Ascending aorta (tissue), 2 donors: ENCODE measurements at regions of chr22 and their contacts with region 1.

Region 1: GRCh38 chr22:17910561-17911311 is 113.6 kb downstream of the MICAL3 start:
- DNase-seq: peak; percentile 44 to 87
- H3K4me3 ChIP-seq: no peak overlapping the region
- H3K27ac ChIP-seq: peak overlapping the region; percentile 67 to 79
- H3K4me1 ChIP-seq: peaks cover 3 to 23% of the 10 kb centered on the region in 2 donors
- H3K27me3 ChIP-seq: no peaks in the 10 kb centered on the region
- CTCF ChIP-seq: peak in 2 of 3 experiments; percentile 34 to 49

Region 2: GRCh38 chr22:17810570-17811116 is 100.1 kb before region 1 on chr22:
- intact Hi-C with region 1: no loop called
- DNase-seq: no peak
- H3K4me3 ChIP-seq: no peak overlapping the region
- H3K27ac ChIP-seq: no peak overlapping the region
- H3K4me1 ChIP-seq: no peaks in the 10 kb centered on the region
- H3K27me3 ChIP-seq: no peaks in the 10 kb centered on the region
- CTCF ChIP-seq: no peak

Region 3: GRCh38 chr22:17824457-17824856 is 86.3 kb before region 1 on chr22:
- intact Hi-C with region 1: no loop called
- DNase-seq: no peak
- H3K4me3 ChIP-seq: no peak overlapping the region
- H3K27ac ChIP-seq: no peak overlapping the region
- H3K4me1 ChIP-seq: no peaks in the 10 kb centered on the region
- H3K27me3 ChIP-seq: no peaks in the 10 kb centered on the region
- CTCF ChIP-seq: no peak

Region 4: GRCh38 chr22:17862646-17863181 is 48.0 kb before region 1 on chr22:
- intact Hi-C with region 1: loop called (anchors 5 kb)
- DNase-seq: no peak
- H3K4me3 ChIP-seq: no peak overlapping the region
- H3K27ac ChIP-seq: no peak overlapping the region
- H3K4me1 ChIP-seq: peaks cover 0 to 10% of the 10 kb centered on the region in 2 donors
- H3K27me3 ChIP-seq: no peaks in the 10 kb centered on the region
- CTCF ChIP-seq: no peak

Region 5: GRCh38 chr22:18001040-18001893 is 90.5 kb after region 1 on chr22:
- intact Hi-C with region 1: loop called (anchors 2 kb)
- DNase-seq: peak; percentile 65 to 94
- H3K4me3 ChIP-seq: peak overlapping the region; percentile 70 to 98
- H3K27ac ChIP-seq: peak overlapping the region; percentile 88 to 92
- H3K4me1 ChIP-seq: peaks cover 0 to 11% of the 10 kb centered on the region in 2 donors
- H3K27me3 ChIP-seq: no peaks in the 10 kb centered on the region
- CTCF ChIP-seq: peak; percentile 37 to 58 (median 50)

Region 6: GRCh38 chr22:18024276-18024947 is 113.7 kb after region 1 on chr22 and contains the start of gene MICAL3:
- intact Hi-C with region 1: loop called (anchors 2 kb)
- DNase-seq: peak in 1 of 2 donors; percentile 75
- H3K4me3 ChIP-seq: peak within 1 kb of the TSS; percentile 71 to 88
- H3K27ac ChIP-seq: peak within 1 kb of the TSS; percentile 69
- H3K4me1 ChIP-seq: peaks cover 0 to 3% of the 10 kb centered on the region in 2 donors
- H3K27me3 ChIP-seq: no peaks in the 10 kb centered on the region
- CTCF ChIP-seq: peak; percentile 26 to 62 (median 51)
- total RNA-seq, gene MICAL3: 36.9 TPM